ENCODE measurements at regions of chr21 and their contacts with region 1.

Region 1: GRCh38 chr21:25759573-25759972 is 24.8 kb downstream of the GABPA start:
- DNase-seq: peak; percentile 51
- ATAC-seq: peak; percentile 42
- H3K4me3 ChIP-seq: no peak overlapping the region
- H3K27ac ChIP-seq: no peak overlapping the region
- H3K4me1 ChIP-seq: peaks cover 5% of the 10 kb centered on the region
- H3K27me3 ChIP-seq: no peaks in the 10 kb centered on the region
- CTCF ChIP-seq: no peak
- POLR2A ChIP-seq: no peak
- RAD21 ChIP-seq: no peak

Region 2: GRCh38 chr21:25801217-25802014 is 41.8 kb after region 1 on chr21:
- CTCF ChIA-PET with region 1: no interaction called
- POLR2A ChIA-PET with region 1: no interaction called
- dilution Hi-C with region 1: no loop called
- in situ Hi-C with region 1: no loop called
- intact Hi-C with region 1: loop called (anchors 1 kb)
- DNase-seq: peak; percentile 76
- ATAC-seq: peak; percentile 100
- H3K4me3 ChIP-seq: peak overlapping the region; percentile 3; the same call in 1 of the 2 replicates
- H3K27ac ChIP-seq: no peak overlapping the region
- H3K4me1 ChIP-seq: no peaks in the 10 kb centered on the region
- H3K27me3 ChIP-seq: peaks cover 3% of the 10 kb centered on the region; the same call in 1 of the 2 replicates
- CTCF ChIP-seq: peak; percentile 98
- POLR2A ChIP-seq: no peak
- RAD21 ChIP-seq: peak; percentile 55

Region 3: GRCh38 chr21:25826652-25827051 is 67.1 kb after region 1 on chr21:
- CTCF ChIA-PET with region 1: interaction called, 10 read pairs
- POLR2A ChIA-PET with region 1: no interaction called
- dilution Hi-C with region 1: no loop called
- in situ Hi-C with region 1: no loop called
- intact Hi-C with region 1: no loop called
- DNase-seq: no peak
- ATAC-seq: no peak
- H3K4me3 ChIP-seq: no peak overlapping the region
- H3K27ac ChIP-seq: no peak overlapping the region
- H3K4me1 ChIP-seq: no peaks in the 10 kb centered on the region
- H3K27me3 ChIP-seq: no peaks in the 10 kb centered on the region; the same call in 1 of the 2 replicates
- CTCF ChIP-seq: no peak
- POLR2A ChIP-seq: no peak
- RAD21 ChIP-seq: no peak

Measured in IMR-90 (cell line).